Endothelial cell of umbilical vein (primary cell): ENCODE measurements at regions of chr1 and their contacts with region 1.

Region 1: GRCh38 chr1:31182352-31182751 is 57.3 kb downstream of the NKAIN1 start:
- DNase-seq: peak; percentile 68
- H3K4me3 ChIP-seq: no peak overlapping the region
- H3K27ac ChIP-seq: no peak overlapping the region
- H3K4me1 ChIP-seq: no peaks in the 10 kb centered on the region
- H3K27me3 ChIP-seq: peaks cover 3 to 4% of the 10 kb centered on the region in 2 experiments
- CTCF ChIP-seq: peak; percentile 7 to 25
- POLR2A ChIP-seq: no peak

Region 2: GRCh38 chr1:31135973-31136600 is 46.3 kb before region 1 on chr1:
- CTCF ChIA-PET with region 1: no interaction called
- POLR2A ChIA-PET with region 1: no interaction called
- dilution Hi-C with region 1: no loop called
- intact Hi-C with region 1: no loop called
- DNase-seq: no peak
- H3K4me3 ChIP-seq: no peak overlapping the region
- H3K27ac ChIP-seq: no peak overlapping the region
- H3K4me1 ChIP-seq: no peaks in the 10 kb centered on the region
- H3K27me3 ChIP-seq: no peaks in the 10 kb centered on the region
- CTCF ChIP-seq: no peak
- POLR2A ChIP-seq: no peak

Region 3: GRCh38 chr1:31166462-31166861 is 15.9 kb before region 1 on chr1:
- CTCF ChIA-PET with region 1: interaction called, 46 read pairs
- POLR2A ChIA-PET with region 1: no interaction called
- dilution Hi-C with region 1: no loop called
- intact Hi-C with region 1: no loop called
- DNase-seq: no peak
- H3K4me3 ChIP-seq: no peak overlapping the region
- H3K27ac ChIP-seq: no peak overlapping the region
- H3K4me1 ChIP-seq: peaks cover 5% of the 10 kb centered on the region
- H3K27me3 ChIP-seq: no peaks in the 10 kb centered on the region
- CTCF ChIP-seq: no peak
- POLR2A ChIP-seq: no peak

Region 4: GRCh38 chr1:31272369-31272768 is 90.0 kb after region 1 on chr1:
- CTCF ChIA-PET with region 1: interaction called, 3 read pairs
- POLR2A ChIA-PET with region 1: no interaction called
- dilution Hi-C with region 1: no loop called
- intact Hi-C with region 1: loop called (anchors 5 kb)
- DNase-seq: peak; percentile 90
- H3K4me3 ChIP-seq: no peak overlapping the region
- H3K27ac ChIP-seq: peak overlapping the region; percentile 8
- H3K4me1 ChIP-seq: peaks cover 7% of the 10 kb centered on the region
- H3K27me3 ChIP-seq: no peaks in the 10 kb centered on the region
- CTCF ChIP-seq: no peak
- POLR2A ChIP-seq: no peak

Region 5: GRCh38 chr1:31335007-31335406 is 152.7 kb after region 1 on chr1:
- CTCF ChIA-PET with region 1: interaction called, 23 read pairs
- POLR2A ChIA-PET with region 1: no interaction called
- dilution Hi-C with region 1: no loop called
- intact Hi-C with region 1: loop called (anchors 1 kb)
- DNase-seq: peak; percentile 67
- H3K4me3 ChIP-seq: no peak overlapping the region
- H3K27ac ChIP-seq: no peak overlapping the region
- H3K4me1 ChIP-seq: no peaks in the 10 kb centered on the region
- H3K27me3 ChIP-seq: no peaks in the 10 kb centered on the region
- CTCF ChIP-seq: peak; percentile 20 to 33
- POLR2A ChIP-seq: no peak

Region 6: GRCh38 chr1:31394628-31395193 is 212.4 kb after region 1 on chr1:
- CTCF ChIA-PET with region 1: interaction called, 9 read pairs
- POLR2A ChIA-PET with region 1: no interaction called
- dilution Hi-C with region 1: no loop called
- intact Hi-C with region 1: loop called (anchors 10 kb)
- DNase-seq: peak; percentile 71
- H3K4me3 ChIP-seq: no peak overlapping the region
- H3K27ac ChIP-seq: no peak overlapping the region
- H3K4me1 ChIP-seq: peaks cover 5% of the 10 kb centered on the region
- H3K27me3 ChIP-seq: no peaks in the 10 kb centered on the region
- CTCF ChIP-seq: peak; percentile 90 to 96
- POLR2A ChIP-seq: no peak

Region 7: DNA sequence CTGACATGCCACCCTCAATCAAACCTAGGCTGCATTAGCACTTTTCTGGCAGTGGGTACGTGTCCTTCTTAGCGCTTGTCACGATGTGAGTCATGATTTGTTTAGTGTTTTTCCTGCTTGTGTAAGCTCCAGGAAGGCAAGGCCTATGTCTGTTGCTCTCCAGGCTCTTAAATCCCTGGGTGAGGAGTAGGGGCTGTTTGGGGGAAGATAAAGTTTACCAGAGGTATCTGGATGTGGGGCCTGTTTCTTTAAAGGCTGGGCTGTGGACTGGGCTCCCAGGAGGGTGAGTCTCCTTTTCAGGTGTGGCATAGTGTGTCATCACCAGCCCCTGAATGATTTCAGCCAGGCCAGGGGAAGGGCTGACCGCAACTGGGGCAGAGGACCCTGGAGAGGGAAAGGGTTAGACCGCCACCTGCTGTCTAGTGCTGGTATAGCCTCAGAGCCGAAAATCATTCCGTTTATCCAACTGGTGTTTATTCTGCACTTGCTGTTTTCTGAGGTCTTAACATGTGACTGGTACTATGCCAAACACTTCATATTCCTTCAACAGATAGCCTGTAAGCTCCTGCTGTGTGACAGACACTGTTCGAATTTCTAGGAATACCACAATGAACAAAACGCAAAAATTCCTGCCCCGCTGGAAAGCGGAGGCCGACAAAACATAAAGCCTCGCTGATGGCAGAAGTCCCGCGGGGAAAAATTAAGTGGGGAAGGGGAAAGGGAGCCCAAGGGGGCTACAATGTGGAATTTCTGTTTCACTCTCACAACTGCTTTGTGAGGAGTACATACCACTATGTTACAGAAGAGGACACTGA is 240.4 kb after region 1 on chr1:
- CTCF ChIA-PET with region 1: interaction called, 121 read pairs
- POLR2A ChIA-PET with region 1: no interaction called
- dilution Hi-C with region 1: no loop called
- intact Hi-C with region 1: loop called (anchors 1 kb)
- DNase-seq: peak; percentile 67
- H3K4me3 ChIP-seq: no peak overlapping the region
- H3K27ac ChIP-seq: peak overlapping the region; percentile 5
- H3K4me1 ChIP-seq: peaks cover 4% of the 10 kb centered on the region
- H3K27me3 ChIP-seq: no peaks in the 10 kb centered on the region
- CTCF ChIP-seq: peak; percentile 95
- POLR2A ChIP-seq: no peak